ENCODE measurements at regions of chr4 and their contacts with region 1.

Region 1: GRCh38 chr4:145887241-145887991 is 51.2 kb downstream of the ZNF827 start:
- DNase-seq: peak in 1 of 2 experiments; percentile 36
- H3K4me3 ChIP-seq: peak overlapping the region in 1 of 4 experiments; percentile 6; a peak in 1 of 8 replicates
- H3K27ac ChIP-seq: peak overlapping the region; percentile 44; the same call in 1 of the 2 replicates
- H3K4me1 ChIP-seq: peaks cover 10 to 33% (median 25%) of the 10 kb centered on the region in 4 experiments
- H3K27me3 ChIP-seq: no peaks in the 10 kb centered on the region
- CTCF ChIP-seq: no peak
- EP300 ChIP-seq: no peak
- POLR2A ChIP-seq: no peak
- RAD21 ChIP-seq: peak in 1 of 2 experiments; percentile 1; a peak in 1 of 4 replicates

Region 2: DNA sequence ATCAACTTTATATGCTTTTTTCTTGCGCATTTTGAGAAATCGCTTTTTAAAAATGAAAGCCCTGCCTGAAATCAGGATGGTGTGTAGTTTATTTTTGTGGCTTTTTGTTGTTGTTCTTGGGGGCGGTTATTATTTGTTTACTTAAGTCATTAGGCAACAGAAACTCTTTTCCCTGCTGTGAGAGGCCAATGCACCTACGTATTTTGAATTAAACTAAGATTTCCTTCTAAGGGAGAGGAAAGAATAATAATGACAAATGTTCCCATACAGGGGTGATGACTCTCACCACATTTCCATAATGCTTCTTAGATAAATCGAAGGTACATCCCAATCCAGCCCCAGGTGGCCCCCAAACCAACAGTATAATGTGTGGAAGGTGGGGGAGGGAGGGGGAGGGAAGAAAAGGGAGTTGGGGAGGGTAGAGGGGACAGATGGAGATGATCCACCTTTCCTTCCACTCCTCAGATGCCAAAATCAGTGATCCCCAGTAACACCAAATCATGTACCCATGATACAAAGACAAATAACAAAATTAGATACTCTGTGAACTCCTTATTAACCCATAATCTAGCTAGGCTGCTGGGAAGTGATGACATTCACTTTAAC is 11.6 kb after region 1 on chr4:
- CTCF ChIA-PET with region 1: interaction called, 18 read pairs
- POLR2A ChIA-PET with region 1: interaction called, 3 read pairs
- DNase-seq: no peak
- H3K4me3 ChIP-seq: peak overlapping the region in 1 of 4 experiments; percentile 2; a peak in 1 of 8 replicates
- H3K27ac ChIP-seq: no peak overlapping the region; the same call in 1 of the 2 replicates
- H3K4me1 ChIP-seq: peaks cover 0 to 16% (median 8%) of the 10 kb centered on the region in 4 experiments; a peak in 3 of 7 replicates
- H3K27me3 ChIP-seq: peaks cover 0 to 1% (median 0%) of the 10 kb centered on the region in 4 experiments; a peak in 1 of 7 replicates
- CTCF ChIP-seq: no peak
- EP300 ChIP-seq: no peak
- POLR2A ChIP-seq: no peak
- RAD21 ChIP-seq: no peak

Region 3: GRCh38 chr4:145904413-145905177 is 17.2 kb after region 1 on chr4:
- CTCF ChIA-PET with region 1: interaction called, 19 read pairs
- POLR2A ChIA-PET with region 1: no interaction called
- DNase-seq: no peak
- H3K4me3 ChIP-seq: no peak overlapping the region
- H3K27ac ChIP-seq: no peak overlapping the region
- H3K4me1 ChIP-seq: peaks cover 0 to 18% (median 10%) of the 10 kb centered on the region in 4 experiments; a peak in 5 of 7 replicates
- H3K27me3 ChIP-seq: peaks cover 0 to 1% (median 0%) of the 10 kb centered on the region in 4 experiments; a peak in 1 of 7 replicates
- CTCF ChIP-seq: no peak
- EP300 ChIP-seq: no peak
- POLR2A ChIP-seq: no peak
- RAD21 ChIP-seq: no peak

Region 4: DNA sequence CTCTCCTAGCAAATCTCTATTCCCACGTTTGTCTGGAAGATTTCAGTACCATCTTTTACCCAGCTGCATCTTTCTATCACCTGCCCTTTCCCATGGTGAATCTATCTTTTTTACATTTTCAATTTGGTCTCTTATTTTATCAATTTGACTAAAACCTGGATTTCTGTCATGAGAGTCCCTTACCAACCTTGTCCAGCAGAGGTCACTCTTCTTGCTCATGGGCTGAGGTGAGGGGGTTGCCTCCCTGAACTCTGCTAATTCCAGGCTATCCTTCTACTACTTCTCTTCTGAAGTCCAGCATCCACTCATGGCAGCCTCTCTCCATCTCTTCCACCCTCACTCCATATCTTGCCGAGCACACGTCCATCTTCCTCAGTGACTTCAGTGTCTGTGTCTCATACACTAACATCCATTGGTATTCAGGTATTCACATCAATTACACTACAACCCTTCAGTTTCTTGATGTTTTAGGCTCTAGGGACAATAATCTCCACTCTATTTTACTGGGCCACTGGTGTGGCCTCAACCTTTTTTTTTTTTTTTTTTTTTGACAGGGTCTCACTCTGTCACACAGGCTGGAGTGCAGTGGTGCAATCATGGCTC is 69.0 kb after region 1 on chr4:
- CTCF ChIA-PET with region 1: interaction called, 10 read pairs
- POLR2A ChIA-PET with region 1: no interaction called
- DNase-seq: peak in 1 of 2 experiments; percentile 68
- H3K4me3 ChIP-seq: no peak overlapping the region
- H3K27ac ChIP-seq: no peak overlapping the region
- H3K4me1 ChIP-seq: peaks cover 0 to 4% (median 0%) of the 10 kb centered on the region in 4 experiments; a peak in 1 of 7 replicates
- H3K27me3 ChIP-seq: no peaks in the 10 kb centered on the region
- CTCF ChIP-seq: peak; percentile 59 to 82 (median 69)
- EP300 ChIP-seq: no peak
- POLR2A ChIP-seq: no peak
- RAD21 ChIP-seq: peak; percentile 66 to 75

Region 5: GRCh38 chr4:146018247-146018646 is 130.8 kb after region 1 on chr4:
- CTCF ChIA-PET with region 1: no interaction called
- POLR2A ChIA-PET with region 1: no interaction called
- DNase-seq: no peak
- H3K4me3 ChIP-seq: no peak overlapping the region
- H3K27ac ChIP-seq: no peak overlapping the region
- H3K4me1 ChIP-seq: no peaks in the 10 kb centered on the region
- H3K27me3 ChIP-seq: no peaks in the 10 kb centered on the region
- CTCF ChIP-seq: no peak
- EP300 ChIP-seq: no peak
- POLR2A ChIP-seq: no peak
- RAD21 ChIP-seq: no peak